ENCODE measurements at regions of chr3 and their contacts with region 1.

Region 1: GRCh38 chr3:4978204-4978965 is 852 bp upstream of the BHLHE40 start:
- DNase-seq: peak; percentile 100
- H3K4me3 ChIP-seq: peak overlapping the region; percentile 37 to 61 (median 53)
- H3K27ac ChIP-seq: peak overlapping the region; percentile 96
- H3K4me1 ChIP-seq: peaks cover 26% of the 10 kb centered on the region
- H3K27me3 ChIP-seq: no peaks in the 10 kb centered on the region
- CTCF ChIP-seq: no peak

Region 2: GRCh38 chr3:4656059-4656458 is 322.3 kb before region 1 on chr3:
- CTCF ChIA-PET with region 1: no interaction called
- dilution Hi-C with region 1: no loop called
- in situ Hi-C with region 1: no loop called
- intact Hi-C with region 1: loop called (anchors 2 kb)
- DNase-seq: peak; percentile 40
- H3K4me3 ChIP-seq: no peak overlapping the region
- H3K27ac ChIP-seq: no peak overlapping the region
- H3K4me1 ChIP-seq: peaks cover under 1% of the 10 kb centered on the region
- H3K27me3 ChIP-seq: no peaks in the 10 kb centered on the region
- CTCF ChIP-seq: peak; percentile 93 to 95

Region 3: DNA sequence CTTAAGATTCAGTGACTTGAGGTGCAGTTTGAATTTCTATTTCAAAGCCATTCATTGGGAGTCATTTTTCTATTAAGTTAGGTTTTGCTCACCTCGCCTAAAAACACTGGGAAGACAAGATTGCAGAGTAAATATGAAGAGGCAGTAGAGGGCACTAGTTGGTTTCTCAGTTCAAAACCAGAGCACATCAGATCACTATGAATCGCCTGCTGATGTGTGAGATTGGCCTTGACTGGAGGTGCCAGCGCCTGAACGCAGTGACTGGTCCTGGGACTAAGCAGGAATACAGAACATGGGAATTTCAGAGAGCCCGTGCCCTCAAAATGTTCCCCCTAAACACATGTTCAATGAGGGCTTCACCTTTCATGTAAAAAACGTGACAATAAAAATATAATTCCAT is 256.3 kb before region 1 on chr3:
- CTCF ChIA-PET with region 1: no interaction called
- dilution Hi-C with region 1: no loop called
- in situ Hi-C with region 1: loop called (anchors 5 kb)
- intact Hi-C with region 1: loop called (anchors 1 kb)
- DNase-seq: peak; percentile 81
- H3K4me3 ChIP-seq: no peak overlapping the region
- H3K27ac ChIP-seq: peak overlapping the region; percentile 71
- H3K4me1 ChIP-seq: peaks cover 32% of the 10 kb centered on the region
- H3K27me3 ChIP-seq: no peaks in the 10 kb centered on the region
- CTCF ChIP-seq: peak; percentile 37 to 61

Region 4: GRCh38 chr3:4906107-4906621 is 72.2 kb before region 1 on chr3:
- CTCF ChIA-PET with region 1: no interaction called
- dilution Hi-C with region 1: no loop called
- in situ Hi-C with region 1: no loop called
- intact Hi-C with region 1: loop called (anchors 1 kb)
- DNase-seq: peak; percentile 98
- H3K4me3 ChIP-seq: no peak overlapping the region
- H3K27ac ChIP-seq: peak overlapping the region; percentile 82
- H3K4me1 ChIP-seq: peaks cover 21% of the 10 kb centered on the region
- H3K27me3 ChIP-seq: no peaks in the 10 kb centered on the region
- CTCF ChIP-seq: no peak

Region 5: DNA sequence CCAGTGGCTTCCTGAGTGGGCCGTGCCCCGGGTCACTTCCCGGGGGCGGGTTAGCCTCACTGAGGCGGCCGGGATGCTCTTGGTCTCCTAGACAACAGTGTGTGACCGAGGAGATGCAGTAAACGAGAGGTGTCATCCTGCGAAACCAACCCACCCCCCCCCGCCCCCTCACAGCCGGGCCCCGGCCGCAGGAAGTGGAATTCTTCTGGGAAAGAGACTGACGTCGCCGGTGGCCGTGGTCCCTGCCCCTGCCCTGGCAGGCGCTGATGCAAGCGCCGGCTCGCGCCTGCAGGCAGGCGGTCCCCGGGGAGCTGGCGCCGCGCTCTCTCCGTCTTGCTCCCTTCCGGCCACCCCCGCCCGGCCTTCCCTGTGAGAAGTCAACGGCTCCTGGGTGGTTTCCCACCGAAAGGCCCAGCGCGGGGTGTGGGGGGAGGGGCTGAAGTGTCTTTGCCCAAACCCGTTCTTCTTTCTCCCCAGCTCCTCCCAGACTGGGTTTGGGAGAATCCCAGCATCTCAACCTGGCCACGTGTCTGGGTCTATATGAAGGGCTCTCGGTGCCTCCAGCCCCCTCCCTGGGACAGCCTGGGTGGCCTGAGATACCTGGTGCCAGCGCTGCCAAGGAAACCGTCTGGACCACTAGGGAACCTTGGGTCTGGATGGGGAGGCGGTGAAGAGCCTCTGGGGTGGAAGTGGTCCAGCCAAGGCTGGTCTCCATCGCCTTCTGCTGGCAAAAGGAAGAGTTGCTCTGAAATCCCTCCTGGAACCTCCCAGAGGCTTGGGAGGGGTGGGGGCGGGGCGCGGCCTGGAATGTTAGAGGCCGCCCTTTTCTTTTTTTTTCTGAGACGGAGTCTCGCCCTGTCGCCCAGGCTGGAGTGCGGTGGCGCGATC is 48.2 kb after region 1 on chr3:
- CTCF ChIA-PET with region 1: interaction called, 18 read pairs
- dilution Hi-C with region 1: no loop called
- in situ Hi-C with region 1: loop called (anchors 5 kb)
- intact Hi-C with region 1: loop called (anchors 1 kb)
- DNase-seq: peak; percentile 98
- H3K4me3 ChIP-seq: peak overlapping the region; percentile 23 to 44 (median 24)
- H3K27ac ChIP-seq: peak overlapping the region; percentile 100
- H3K4me1 ChIP-seq: peaks cover 34% of the 10 kb centered on the region
- H3K27me3 ChIP-seq: no peaks in the 10 kb centered on the region
- CTCF ChIP-seq: peak; percentile 55 to 81

Region 6: DNA sequence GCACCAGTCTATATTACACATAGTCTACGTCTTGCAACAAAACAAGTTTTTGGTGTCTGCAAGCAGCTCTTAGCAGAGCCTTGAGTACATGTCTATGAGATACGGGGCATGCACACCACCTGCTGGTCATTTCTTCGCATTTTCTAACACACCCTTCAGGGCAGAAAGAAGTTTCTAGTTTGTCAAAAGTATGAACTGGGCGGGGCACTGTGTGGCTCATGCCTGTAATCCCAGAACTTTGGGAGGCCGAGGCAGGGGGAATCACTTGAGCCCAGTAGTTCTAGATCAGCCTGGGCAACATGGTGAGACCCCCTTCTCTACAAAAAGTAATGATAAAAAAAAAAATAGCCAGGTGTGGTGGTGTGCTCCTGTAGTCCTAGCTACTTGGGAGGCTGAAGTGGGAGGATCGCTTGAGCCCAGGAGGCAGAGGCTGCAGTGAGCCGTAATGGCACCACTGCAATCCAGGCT is 79.5 kb after region 1 on chr3:
- CTCF ChIA-PET with region 1: interaction called, 13 read pairs
- dilution Hi-C with region 1: no loop called
- in situ Hi-C with region 1: no loop called
- intact Hi-C with region 1: loop called (anchors 2 kb)
- DNase-seq: peak; percentile 86
- H3K4me3 ChIP-seq: no peak overlapping the region
- H3K27ac ChIP-seq: no peak overlapping the region
- H3K4me1 ChIP-seq: peaks cover 3% of the 10 kb centered on the region
- H3K27me3 ChIP-seq: no peaks in the 10 kb centered on the region
- CTCF ChIP-seq: peak; percentile 76

Region 7: GRCh38 chr3:5187156-5187919 is 209.0 kb after region 1 on chr3 and contains the start of gene EDEM1:
- CTCF ChIA-PET with region 1: no interaction called
- dilution Hi-C with region 1: no loop called
- in situ Hi-C with region 1: loop called in 1 of 2 experiments (anchors 25 kb)
- intact Hi-C with region 1: no loop called
- DNase-seq: peak; percentile 95
- H3K4me3 ChIP-seq: peak within 1 kb of the TSS; percentile 61 to 89 (median 86)
- H3K27ac ChIP-seq: peak within 1 kb of the TSS; percentile 94
- H3K4me1 ChIP-seq: peaks cover 11% of the 10 kb centered on the region
- H3K27me3 ChIP-seq: no peaks in the 10 kb centered on the region
- CTCF ChIP-seq: no peak
- total RNA-seq, gene EDEM1: 78.0 to 98.0 TPM